Vagina (tissue), 2 donors: ENCODE measurements at regions of chr9 and their contacts with region 1.

Region 1: GRCh38 chr9:18255158-18255629 is 218.8 kb upstream of the ADAMTSL1 start:
- DNase-seq: no peak
- H3K4me3 ChIP-seq: no peak overlapping the region
- H3K27ac ChIP-seq: no peak overlapping the region
- H3K4me1 ChIP-seq: no peaks in the 10 kb centered on the region
- H3K27me3 ChIP-seq: no peaks in the 10 kb centered on the region
- CTCF ChIP-seq: peak; percentile 88 to 95 (median 91)
- POLR2A ChIP-seq: no peak

Region 2: GRCh38 chr9:18588002-18588401 is 332.8 kb after region 1 on chr9:
- intact Hi-C with region 1: no loop called
- DNase-seq: no peak
- H3K4me3 ChIP-seq: no peak overlapping the region
- H3K27ac ChIP-seq: no peak overlapping the region
- H3K4me1 ChIP-seq: no peaks in the 10 kb centered on the region
- H3K27me3 ChIP-seq: no peaks in the 10 kb centered on the region
- CTCF ChIP-seq: no peak
- POLR2A ChIP-seq: no peak

Region 3: DNA sequence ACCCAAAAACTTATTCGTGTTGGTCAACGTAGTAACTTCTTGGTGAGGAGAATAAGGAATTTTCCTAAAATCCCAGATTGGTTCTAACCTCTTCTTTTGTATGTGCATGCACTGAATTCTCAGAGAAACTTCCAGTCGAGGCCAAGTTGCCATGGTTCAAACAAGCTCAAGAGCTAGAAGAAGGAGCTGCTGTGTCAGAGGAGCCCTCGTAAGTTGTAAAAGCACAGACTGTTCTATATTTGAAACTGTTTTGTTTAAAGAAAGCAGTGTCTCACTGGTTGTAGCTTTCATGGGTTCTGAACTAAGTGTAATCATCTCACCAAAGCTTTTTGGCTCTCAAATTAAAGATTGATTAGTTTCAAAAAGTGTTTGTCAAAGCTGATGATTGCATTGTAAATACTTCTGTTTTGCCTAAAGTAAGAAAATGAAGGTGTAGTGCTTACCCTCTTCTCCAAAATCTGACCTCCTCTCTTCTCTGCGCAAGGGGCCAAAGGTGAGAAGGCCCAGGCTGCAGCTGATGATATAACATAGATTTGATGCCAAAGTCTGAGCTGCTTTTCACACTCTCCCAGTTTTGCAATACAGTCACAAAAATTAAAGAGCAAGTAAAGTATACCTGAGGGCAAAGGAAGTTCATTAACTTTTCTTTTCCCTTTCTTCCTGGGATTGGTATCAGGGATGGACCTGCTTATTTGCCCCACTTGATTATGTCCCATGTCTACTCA is 429.6 kb after region 1 on chr9:
- intact Hi-C with region 1: loop called (anchors 5 kb)
- DNase-seq: no peak
- H3K4me3 ChIP-seq: no peak overlapping the region
- H3K27ac ChIP-seq: no peak overlapping the region
- H3K4me1 ChIP-seq: peaks cover 10% of the 10 kb centered on the region
- H3K27me3 ChIP-seq: no peaks in the 10 kb centered on the region
- CTCF ChIP-seq: no peak
- POLR2A ChIP-seq: no peak

Region 4: GRCh38 chr9:19149230-19149629 is 894.0 kb after region 1 on chr9:
- intact Hi-C with region 1: no loop called
- DNase-seq: no peak
- H3K4me3 ChIP-seq: no peak overlapping the region
- H3K27ac ChIP-seq: no peak overlapping the region
- H3K4me1 ChIP-seq: no peaks in the 10 kb centered on the region
- H3K27me3 ChIP-seq: no peaks in the 10 kb centered on the region
- CTCF ChIP-seq: no peak
- POLR2A ChIP-seq: no peak